Heart left ventricle (tissue), 16 donors: ENCODE measurements at regions of chr3 and their contacts with region 1.

Region 1: DNA sequence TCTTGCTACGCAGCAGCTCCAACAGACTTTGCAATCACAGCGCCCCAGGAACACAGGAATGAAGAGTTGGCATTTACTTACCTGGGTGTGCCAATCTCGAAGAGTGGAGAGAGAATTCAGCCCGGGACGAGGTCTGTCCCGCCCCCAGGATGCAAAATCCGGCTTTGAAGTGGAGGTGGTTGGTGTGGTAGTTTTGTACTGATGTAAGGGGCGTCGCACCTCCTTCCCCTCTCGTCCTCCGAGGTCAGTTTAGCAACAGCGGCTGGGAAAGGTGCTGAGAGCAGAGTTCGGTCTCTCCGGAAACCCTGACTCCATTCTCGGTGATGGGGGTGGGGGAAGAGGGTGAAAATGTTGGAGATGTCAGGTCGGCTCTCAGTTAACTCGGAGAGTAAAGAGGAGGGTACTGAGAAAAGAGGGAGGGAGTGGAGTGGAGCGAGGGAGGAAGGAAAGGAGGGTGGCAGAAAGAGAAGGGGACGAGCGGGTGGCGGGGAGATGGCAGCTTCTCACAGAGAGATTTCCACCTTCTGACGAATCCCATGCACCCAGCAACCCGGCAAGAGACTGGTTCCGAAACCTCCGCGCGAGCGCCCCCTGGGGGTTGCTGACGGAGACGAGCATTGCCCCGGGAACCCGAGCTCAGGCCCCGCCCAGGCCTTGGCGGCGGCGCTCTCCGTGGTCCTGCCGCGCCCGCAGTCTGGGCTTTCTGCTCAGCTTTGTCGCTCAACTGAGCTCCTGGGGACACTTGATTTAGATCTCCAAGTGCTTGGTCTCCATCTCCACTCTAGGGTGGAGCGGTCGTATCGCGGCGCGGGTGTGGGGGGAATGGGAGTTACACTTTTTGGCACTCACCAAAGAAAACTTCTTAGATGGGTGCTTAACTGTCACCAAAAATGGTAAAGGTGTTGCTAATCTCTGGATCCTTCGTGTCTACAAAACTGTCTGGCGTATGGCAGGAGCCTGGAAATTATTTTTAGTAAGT is at the start of gene CPNE4:
- DNase-seq: peak; percentile 72 to 85 (median 79)
- ATAC-seq: peak; percentile 85 to 98 (median 96)
- H3K4me3 ChIP-seq: peak within 1 kb of the TSS in 7 of 12 donors; percentile 8 to 26 (median 20)
- H3K27ac ChIP-seq: no peak within 1 kb of the TSS
- H3K4me1 ChIP-seq: peaks cover 0 to 13% (median 0%) of the 10 kb centered on the region in 12 donors
- H3K27me3 ChIP-seq: peaks cover 12 to 64% (median 46%) of the 10 kb centered on the region in 9 donors
- CTCF ChIP-seq: peak; percentile 52 to 75 (median 62)
- POLR2A ChIP-seq: no peak
- total RNA-seq, gene CPNE4: 6.6 to 99.7 (median 28.2) TPM

Region 2: DNA sequence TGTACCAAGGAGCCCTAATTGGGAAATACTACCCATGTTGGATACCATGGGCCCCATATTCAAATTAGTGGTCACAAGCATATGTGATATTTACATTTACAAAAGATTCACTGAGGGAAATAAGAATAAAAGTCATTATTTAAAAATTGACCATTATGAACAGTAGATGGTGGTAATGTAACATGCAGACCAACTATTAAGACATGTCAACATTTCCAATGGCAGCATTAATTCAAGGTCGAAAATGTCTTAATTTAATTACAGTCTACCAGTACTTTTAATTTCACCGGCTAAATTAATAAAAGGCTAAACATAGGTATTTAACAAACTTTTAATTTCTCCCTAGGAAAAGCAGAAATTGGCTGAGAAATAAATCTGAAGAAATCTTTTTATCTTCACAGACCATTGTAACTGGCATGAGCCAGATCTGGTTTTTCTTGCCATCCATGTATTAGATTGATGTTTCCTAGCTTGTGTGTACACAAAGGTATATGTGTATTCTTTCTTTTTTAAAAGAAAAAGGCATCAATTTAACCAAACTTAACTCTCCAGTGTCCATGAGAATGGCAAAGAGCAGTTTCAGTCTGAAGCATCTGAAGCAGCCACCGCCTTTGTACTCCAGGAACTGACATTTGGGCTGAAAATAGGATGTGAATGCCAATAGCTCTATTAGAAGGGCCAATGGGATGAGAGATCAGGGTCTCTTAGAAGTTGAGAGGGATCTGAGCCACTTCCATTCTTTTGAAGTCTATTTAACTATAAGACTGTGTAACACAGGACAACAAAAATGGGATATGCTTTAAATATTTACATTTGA is 981.5 kb before region 1 on chr3:
- intact Hi-C with region 1: loop called in 9 of 10 experiments (anchors 5 to 10 kb)
- DNase-seq: no peak
- ATAC-seq: no peak
- H3K4me3 ChIP-seq: no peak overlapping the region
- H3K27ac ChIP-seq: no peak overlapping the region
- H3K4me1 ChIP-seq: no peaks in the 10 kb centered on the region
- H3K27me3 ChIP-seq: no peaks in the 10 kb centered on the region
- CTCF ChIP-seq: peak; percentile 22 to 70 (median 54)
- POLR2A ChIP-seq: no peak

Region 3: GRCh38 chr3:131543714-131544113 is 491.1 kb before region 1 on chr3:
- intact Hi-C with region 1: loop called in 2 of 10 experiments (anchors 10 kb)
- DNase-seq: peak; percentile 68 to 89 (median 78)
- ATAC-seq: peak; percentile 85 to 99 (median 96)
- H3K4me3 ChIP-seq: no peak overlapping the region
- H3K27ac ChIP-seq: peak overlapping the region in 8 of 12 donors; percentile 9 to 70 (median 48)
- H3K4me1 ChIP-seq: peaks cover 0 to 12% (median 3%) of the 10 kb centered on the region in 12 donors
- H3K27me3 ChIP-seq: no peaks in the 10 kb centered on the region
- CTCF ChIP-seq: peak in 1 of 12 donors; percentile 12
- POLR2A ChIP-seq: no peak

Region 4: GRCh38 chr3:131735116-131735515 is 299.7 kb before region 1 on chr3:
- intact Hi-C with region 1: no loop called
- DNase-seq: no peak
- ATAC-seq: no peak
- H3K4me3 ChIP-seq: no peak overlapping the region
- H3K27ac ChIP-seq: no peak overlapping the region
- H3K4me1 ChIP-seq: peaks cover 0 to 17% (median 0%) of the 10 kb centered on the region in 12 donors
- H3K27me3 ChIP-seq: no peaks in the 10 kb centered on the region
- CTCF ChIP-seq: no peak
- POLR2A ChIP-seq: no peak

Region 5: GRCh38 chr3:132180337-132180791 is 145.6 kb after region 1 on chr3:
- intact Hi-C with region 1: loop called in 8 of 10 experiments (anchors 2 to 10 kb)
- DNase-seq: no peak
- ATAC-seq: no peak
- H3K4me3 ChIP-seq: no peak overlapping the region
- H3K27ac ChIP-seq: no peak overlapping the region
- H3K4me1 ChIP-seq: no peaks in the 10 kb centered on the region
- H3K27me3 ChIP-seq: peaks cover 0 to 3% (median 0%) of the 10 kb centered on the region in 9 donors
- CTCF ChIP-seq: peak in 11 of 12 donors; percentile 27 to 53 (median 40)
- POLR2A ChIP-seq: no peak

Region 6: DNA sequence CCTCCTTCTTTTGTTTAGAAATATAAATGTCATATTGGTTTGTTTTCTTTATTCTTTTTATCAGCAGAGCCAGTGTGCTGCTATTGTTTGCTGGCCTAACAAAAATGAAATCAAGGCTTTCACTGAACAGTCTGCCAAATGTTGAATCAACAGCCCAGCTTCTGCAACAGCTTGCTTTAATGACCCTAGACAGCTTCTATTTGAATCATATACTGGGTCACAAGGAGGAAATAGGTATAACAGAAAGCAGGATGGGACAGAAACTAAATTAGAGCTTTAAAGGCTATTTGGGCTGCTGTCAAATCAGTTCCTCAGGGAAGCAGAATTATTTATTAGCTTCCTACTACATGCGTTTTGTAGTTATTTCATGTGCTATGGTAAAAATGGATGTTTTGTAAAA is 370.4 kb after region 1 on chr3:
- intact Hi-C with region 1: loop called in 1 of 10 experiments (anchors 10 kb)
- DNase-seq: no peak
- ATAC-seq: peak in 3 of 4 donors; percentile 38 to 49 (median 47)
- H3K4me3 ChIP-seq: no peak overlapping the region
- H3K27ac ChIP-seq: peak overlapping the region in 1 of 12 donors; percentile 13
- H3K4me1 ChIP-seq: peaks cover 0 to 20% (median 6%) of the 10 kb centered on the region in 12 donors
- H3K27me3 ChIP-seq: no peaks in the 10 kb centered on the region
- CTCF ChIP-seq: no peak
- POLR2A ChIP-seq: no peak